ENCODE measurements at regions of chr4 and their contacts with region 1.

Region 1: GRCh38 chr4:103692615-103693014 is 27.2 kb downstream of the TACR3 start:
- DNase-seq: no peak
- H3K4me3 ChIP-seq: no peak overlapping the region
- CTCF ChIP-seq: no peak
- POLR2A ChIP-seq: no peak

Region 2: GRCh38 chr4:102129810-102130209 is 1562.8 kb before region 1 on chr4:
- intact Hi-C with region 1: no loop called
- DNase-seq: no peak
- H3K4me3 ChIP-seq: no peak overlapping the region
- CTCF ChIP-seq: no peak
- POLR2A ChIP-seq: no peak

Region 3: DNA sequence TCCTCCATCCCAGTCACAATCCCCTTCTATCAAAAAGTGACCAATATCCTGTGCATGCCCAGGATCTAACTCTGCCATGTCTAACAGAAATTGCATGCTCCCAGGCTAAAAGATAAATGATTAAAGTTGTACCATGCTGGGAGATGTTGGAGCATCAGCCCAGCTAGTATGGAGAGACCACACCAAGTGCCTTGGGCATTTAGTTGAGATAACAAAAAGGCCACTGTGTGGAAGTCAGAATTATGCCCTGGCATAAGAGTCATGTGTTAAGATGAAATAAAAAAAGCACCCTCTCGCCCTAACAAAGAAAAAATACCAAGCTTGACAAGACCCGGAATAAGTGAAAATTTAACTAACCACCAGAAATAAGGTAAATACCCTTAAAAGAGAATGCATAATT is 338.6 kb before region 1 on chr4:
- intact Hi-C with region 1: no loop called
- DNase-seq: no peak
- H3K4me3 ChIP-seq: no peak overlapping the region
- CTCF ChIP-seq: no peak
- POLR2A ChIP-seq: no peak

Region 4: GRCh38 chr4:105280338-105281123 is 1587.9 kb after region 1 on chr4:
- intact Hi-C with region 1: loop called (anchors 5 kb)
- DNase-seq: no peak
- H3K4me3 ChIP-seq: no peak overlapping the region
- CTCF ChIP-seq: no peak
- POLR2A ChIP-seq: no peak

Measured in lower leg skin (tissue), 4 donors.